ENCODE measurements at regions of chr17 and their contacts with region 1.

Region 1: GRCh38 chr17:28398280-28398981 is 7.6 kb downstream of the SLC46A1 start:
- DNase-seq: no peak
- ATAC-seq: no peak
- H3K4me3 ChIP-seq: no peak overlapping the region
- H3K27ac ChIP-seq: no peak overlapping the region
- H3K4me1 ChIP-seq: no peaks in the 10 kb centered on the region
- H3K27me3 ChIP-seq: no peaks in the 10 kb centered on the region
- CTCF ChIP-seq: no peak
- POLR2A ChIP-seq: no peak

Region 2: GRCh38 chr17:28446728-28447395 is 48.4 kb after region 1 on chr17:
- in situ Hi-C with region 1: loop called in 1 of 4 experiments (anchors 5 kb)
- intact Hi-C with region 1: no loop called
- DNase-seq: no peak
- ATAC-seq: no peak
- H3K4me3 ChIP-seq: no peak overlapping the region
- H3K27ac ChIP-seq: no peak overlapping the region
- H3K4me1 ChIP-seq: no peaks in the 10 kb centered on the region
- H3K27me3 ChIP-seq: peaks cover 0 to 3% (median 2%) of the 10 kb centered on the region in 3 donors
- CTCF ChIP-seq: no peak
- POLR2A ChIP-seq: no peak